ENCODE measurements at regions of chr2 and their contacts with region 1.

Region 1: DNA sequence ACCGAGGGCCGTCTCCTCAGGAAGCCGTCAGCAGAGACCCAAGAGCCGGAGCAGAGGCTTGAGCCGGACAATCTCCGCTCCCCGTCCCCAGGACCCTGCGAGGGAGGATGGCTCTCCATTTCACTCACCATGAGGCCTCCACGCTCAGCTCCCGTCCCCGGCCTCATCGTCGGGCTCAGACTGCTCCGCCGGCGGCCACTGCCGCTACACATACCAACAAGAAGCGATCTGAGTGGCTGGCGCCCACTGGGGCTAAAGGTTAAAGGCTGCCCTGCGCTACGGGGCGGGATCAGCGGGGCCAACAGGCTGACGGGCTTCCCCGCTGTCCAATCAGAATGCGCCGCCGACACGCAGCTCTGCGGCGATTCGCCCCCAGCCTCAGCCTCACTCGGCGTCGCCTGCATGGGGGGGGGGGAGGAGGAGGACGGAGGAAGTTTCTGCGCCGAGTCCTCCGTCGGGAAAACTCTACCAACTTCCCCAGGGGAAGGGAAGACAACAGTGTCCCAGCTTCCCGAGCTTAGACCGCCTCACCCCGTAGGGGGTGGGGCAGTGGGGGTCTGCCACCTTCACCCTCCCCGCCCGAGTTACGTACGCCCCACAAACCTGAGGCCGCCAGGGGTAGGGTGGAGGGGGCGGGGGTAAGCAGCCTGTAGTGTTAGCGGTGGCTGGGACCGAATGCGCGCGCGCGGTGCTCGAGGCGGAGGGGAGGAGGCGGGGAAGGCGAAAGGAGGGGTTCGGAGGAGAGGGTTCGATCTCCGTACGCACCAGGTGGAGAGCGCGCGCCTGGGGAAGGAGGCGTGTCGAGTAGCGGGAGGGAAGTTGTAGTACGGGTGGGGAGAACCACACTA is at the start of gene PRPF40A:
- DNase-seq: peak; percentile 99
- H3K4me3 Mint-ChIP-seq: peak within 1 kb of the TSS; percentile 100
- H3K27ac Mint-ChIP-seq: peak within 1 kb of the TSS; percentile 100
- H3K4me1 Mint-ChIP-seq: peaks cover 61% of the 10 kb centered on the region
- H3K27me3 Mint-ChIP-seq: no peaks in the 10 kb centered on the region
- total RNA-seq, gene PRPF40A: 128 to 138 TPM

Region 2: GRCh38 chr2:152648336-152648735 is 69.1 kb before region 1 on chr2:
- CTCF ChIA-PET with region 1: no interaction called
- POLR2A ChIA-PET with region 1: no interaction called
- intact Hi-C with region 1: no loop called
- DNase-seq: no peak
- H3K4me3 Mint-ChIP-seq: no peak overlapping the region
- H3K27ac Mint-ChIP-seq: no peak overlapping the region
- H3K4me1 Mint-ChIP-seq: no peaks in the 10 kb centered on the region
- H3K27me3 Mint-ChIP-seq: no peaks in the 10 kb centered on the region

Region 3: GRCh38 chr2:152676461-152676860 is 41.0 kb before region 1 on chr2:
- CTCF ChIA-PET with region 1: interaction called, 4 read pairs
- POLR2A ChIA-PET with region 1: no interaction called
- intact Hi-C with region 1: loop called (anchors 5 kb)
- DNase-seq: no peak
- H3K4me3 Mint-ChIP-seq: no peak overlapping the region
- H3K27ac Mint-ChIP-seq: no peak overlapping the region
- H3K4me1 Mint-ChIP-seq: peaks cover 10% of the 10 kb centered on the region
- H3K27me3 Mint-ChIP-seq: no peaks in the 10 kb centered on the region

Region 4: GRCh38 chr2:152694161-152694661 is 23.2 kb before region 1 on chr2:
- CTCF ChIA-PET with region 1: interaction called, 8 read pairs
- POLR2A ChIA-PET with region 1: interaction called, 32 read pairs
- intact Hi-C with region 1: loop called (anchors 1 kb)
- DNase-seq: peak; percentile 71
- H3K4me3 Mint-ChIP-seq: peak overlapping the region; percentile 60
- H3K27ac Mint-ChIP-seq: peak overlapping the region; percentile 80
- H3K4me1 Mint-ChIP-seq: peaks cover 40% of the 10 kb centered on the region
- H3K27me3 Mint-ChIP-seq: no peaks in the 10 kb centered on the region

Region 5: GRCh38 chr2:152815634-152816257 is 98.3 kb after region 1 on chr2:
- CTCF ChIA-PET with region 1: no interaction called
- POLR2A ChIA-PET with region 1: no interaction called
- intact Hi-C with region 1: no loop called
- DNase-seq: no peak
- H3K4me3 Mint-ChIP-seq: no peak overlapping the region
- H3K27ac Mint-ChIP-seq: no peak overlapping the region
- H3K4me1 Mint-ChIP-seq: no peaks in the 10 kb centered on the region
- H3K27me3 Mint-ChIP-seq: peaks cover 4% of the 10 kb centered on the region

Region 6: DNA sequence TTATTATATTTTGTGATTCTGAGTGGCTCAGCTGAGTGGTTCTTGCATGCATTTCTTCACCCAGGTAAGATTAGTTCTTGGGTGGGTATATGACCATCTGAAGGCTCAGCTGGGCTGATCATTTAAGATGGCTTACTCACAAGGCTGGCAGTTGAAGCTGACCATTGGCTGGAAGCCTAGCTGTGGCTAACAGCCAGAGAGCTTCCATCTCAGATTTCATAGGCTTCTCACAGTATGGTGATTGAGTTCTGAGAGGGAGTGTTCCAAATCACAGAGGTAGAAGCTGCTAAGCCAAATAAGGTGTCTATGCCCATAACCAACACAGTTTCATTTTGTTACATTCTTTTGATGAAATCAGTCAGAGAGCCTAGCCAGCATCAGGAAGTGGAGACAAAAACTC is 878.5 kb after region 1 on chr2:
- CTCF ChIA-PET with region 1: no interaction called
- POLR2A ChIA-PET with region 1: no interaction called
- intact Hi-C with region 1: no loop called
- DNase-seq: no peak
- H3K4me3 Mint-ChIP-seq: no peak overlapping the region
- H3K27ac Mint-ChIP-seq: no peak overlapping the region
- H3K4me1 Mint-ChIP-seq: no peaks in the 10 kb centered on the region
- H3K27me3 Mint-ChIP-seq: no peaks in the 10 kb centered on the region